HepG2 (cell line): ENCODE measurements at regions of chr5 and their contacts with region 1.

Region 1: GRCh38 chr5:74500110-74500917 is 140.2 kb downstream of the ENC1 start:
- DNase-seq: peak; percentile 96
- ATAC-seq: peak; percentile 83
- H3K4me3 ChIP-seq: peak overlapping the region; percentile 43 to 50 (median 47); a peak in 5 of 6 replicates
- H3K27ac ChIP-seq: peak overlapping the region; percentile 72
- H3K4me1 ChIP-seq: peaks cover 80% of the 10 kb centered on the region
- H3K27me3 ChIP-seq: no peaks in the 10 kb centered on the region
- CTCF ChIP-seq: no peak
- EP300 ChIP-seq: peak in 1 of 2 experiments; percentile 94; a peak in 2 of 4 replicates
- POLR2A ChIP-seq: 0 out of 4 replicates have a peak, but pooled peaks of 1 of the 2 experiments have one; percentile 19
- RAD21 ChIP-seq: no peak

Region 2: DNA sequence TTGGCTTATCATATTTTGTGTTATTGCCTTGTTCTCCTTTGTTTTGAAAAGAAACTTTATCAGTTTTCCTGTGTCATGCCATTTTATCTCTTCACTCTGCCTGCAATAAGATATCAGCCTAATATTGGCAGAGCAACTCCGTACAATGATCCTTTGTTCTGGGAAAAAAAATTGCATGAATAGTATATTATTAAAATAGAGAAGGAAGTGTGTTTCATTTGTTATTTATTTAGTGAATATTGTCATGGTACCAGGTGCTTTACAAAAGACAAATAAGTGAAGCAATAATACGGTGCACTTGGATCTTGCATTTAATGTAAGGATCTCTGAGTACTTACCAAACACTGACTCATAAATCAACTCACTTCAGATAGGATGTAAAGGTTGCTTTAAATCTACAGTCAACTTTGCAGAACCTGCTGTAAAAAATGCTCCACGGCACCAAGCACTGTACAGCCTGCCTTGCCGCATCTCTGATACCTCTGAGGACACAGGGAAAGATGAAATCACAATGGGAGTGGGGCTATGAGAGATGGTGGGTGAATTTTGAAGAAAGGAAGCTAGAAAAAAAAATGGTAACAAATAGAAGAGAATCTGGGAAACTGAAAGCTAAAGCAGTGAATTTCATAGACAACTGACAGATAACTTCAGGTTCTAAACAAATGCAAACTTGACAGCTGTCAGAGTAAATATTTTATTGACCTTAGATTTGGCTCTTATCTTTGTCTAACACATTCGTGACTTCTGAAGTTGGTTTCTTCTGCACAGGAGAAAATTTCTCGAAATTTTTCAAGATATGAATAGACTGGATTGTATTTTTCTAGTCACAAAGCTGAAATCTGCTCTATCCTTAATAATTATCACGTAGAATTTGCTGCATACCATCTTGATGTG is 91.9 kb before region 1 on chr5:
- CTCF ChIA-PET with region 1: no interaction called
- POLR2A ChIA-PET with region 1: no interaction called
- in situ Hi-C with region 1: no loop called
- intact Hi-C with region 1: loop called (anchors 1 kb)
- DNase-seq: peak; percentile 96
- ATAC-seq: peak; percentile 96
- H3K4me3 ChIP-seq: peak overlapping the region in 2 of 3 experiments; percentile 35 to 38; a peak in 2 of 6 replicates
- H3K27ac ChIP-seq: peak overlapping the region; percentile 66
- H3K4me1 ChIP-seq: peaks cover 66% of the 10 kb centered on the region
- H3K27me3 ChIP-seq: no peaks in the 10 kb centered on the region
- CTCF ChIP-seq: no peak
- EP300 ChIP-seq: peak; percentile 87 to 92; a peak in 3 of 4 replicates
- POLR2A ChIP-seq: no peak
- RAD21 ChIP-seq: 0 out of 2 replicates have a peak, but pooled peaks have one; percentile 17

Region 3: DNA sequence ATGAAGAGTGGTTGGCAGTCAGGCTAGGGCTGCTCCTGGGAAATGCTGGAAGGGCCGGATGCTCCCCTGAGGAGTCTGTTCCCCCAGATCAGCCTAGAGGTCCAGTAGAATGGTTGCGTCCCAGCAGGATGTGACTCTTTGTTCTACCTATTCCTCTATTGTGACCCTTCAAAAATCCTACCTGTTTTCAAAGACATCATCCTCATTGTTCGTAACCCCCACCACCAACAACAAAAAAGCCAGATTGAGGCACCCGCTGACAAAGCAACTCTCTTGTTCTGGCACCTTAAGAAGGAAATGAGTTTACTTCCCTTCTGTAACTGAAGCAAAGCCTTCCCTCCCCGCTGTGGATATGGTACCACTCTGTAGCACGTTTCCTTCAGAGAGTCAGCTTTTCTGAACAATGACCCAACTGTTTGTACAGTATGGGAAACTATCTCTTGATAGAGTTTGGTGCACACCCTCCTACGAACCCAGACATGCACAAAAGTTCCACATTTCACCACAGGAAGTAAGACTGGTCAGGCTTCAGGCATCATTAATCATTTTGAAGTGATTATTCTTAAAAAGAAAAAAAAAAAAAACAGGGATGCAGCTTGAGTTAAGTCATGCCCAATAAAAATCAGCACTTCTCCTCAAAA is 66.9 kb before region 1 on chr5:
- CTCF ChIA-PET with region 1: no interaction called
- POLR2A ChIA-PET with region 1: no interaction called
- in situ Hi-C with region 1: no loop called
- intact Hi-C with region 1: no loop called
- DNase-seq: no peak
- ATAC-seq: no peak
- H3K4me3 ChIP-seq: no peak overlapping the region
- H3K27ac ChIP-seq: no peak overlapping the region
- H3K4me1 ChIP-seq: peaks cover 12% of the 10 kb centered on the region
- H3K27me3 ChIP-seq: no peaks in the 10 kb centered on the region; a peak in 1 of 5 replicates
- CTCF ChIP-seq: no peak
- EP300 ChIP-seq: no peak
- POLR2A ChIP-seq: no peak
- RAD21 ChIP-seq: no peak

Region 4: GRCh38 chr5:74521401-74521800 is 21.1 kb after region 1 on chr5:
- CTCF ChIA-PET with region 1: no interaction called
- POLR2A ChIA-PET with region 1: no interaction called
- in situ Hi-C with region 1: no loop called
- intact Hi-C with region 1: no loop called
- DNase-seq: no peak
- ATAC-seq: no peak
- H3K4me3 ChIP-seq: no peak overlapping the region
- H3K27ac ChIP-seq: no peak overlapping the region
- H3K4me1 ChIP-seq: peaks cover 60% of the 10 kb centered on the region
- H3K27me3 ChIP-seq: no peaks in the 10 kb centered on the region
- CTCF ChIP-seq: no peak
- EP300 ChIP-seq: no peak
- POLR2A ChIP-seq: no peak
- RAD21 ChIP-seq: no peak

Region 5: DNA sequence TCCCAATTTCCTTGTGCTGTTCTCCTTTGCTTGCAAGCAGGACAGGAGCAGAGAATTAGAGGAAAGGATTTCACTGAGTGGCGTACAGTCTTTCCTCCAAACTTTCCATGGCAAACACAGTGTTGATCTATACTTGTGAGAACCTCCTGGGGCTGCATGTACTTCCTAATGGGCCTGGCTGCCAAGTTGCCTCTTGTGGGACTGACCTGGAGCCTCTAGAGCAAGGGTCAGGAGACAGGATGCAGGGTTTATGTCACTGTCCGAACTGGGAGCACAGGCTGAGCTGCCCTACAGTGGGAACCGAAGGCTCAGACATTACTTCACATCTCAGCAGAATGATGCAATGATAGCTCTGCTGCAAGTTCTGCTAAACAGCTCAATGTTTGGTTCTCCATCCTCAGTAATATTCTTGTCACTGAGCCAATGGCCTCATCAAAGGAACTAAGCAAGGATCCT is 37.9 kb after region 1 on chr5:
- CTCF ChIA-PET with region 1: no interaction called
- POLR2A ChIA-PET with region 1: interaction called, 3 read pairs
- in situ Hi-C with region 1: loop called (anchors 5 kb)
- intact Hi-C with region 1: no loop called
- DNase-seq: peak; percentile 89
- ATAC-seq: peak; percentile 99
- H3K4me3 ChIP-seq: peak overlapping the region in 1 of 3 experiments; percentile 32; a peak in 2 of 6 replicates
- H3K27ac ChIP-seq: peak overlapping the region; percentile 51
- H3K4me1 ChIP-seq: peaks cover 61% of the 10 kb centered on the region
- H3K27me3 ChIP-seq: no peaks in the 10 kb centered on the region
- CTCF ChIP-seq: 0 out of 2 replicates have a peak, but pooled peaks have one; percentile 8
- EP300 ChIP-seq: peak; percentile 57 to 87; a peak in 2 of 4 replicates
- POLR2A ChIP-seq: 0 out of 4 replicates have a peak, but pooled peaks of 1 of the 2 experiments have one; percentile 18
- RAD21 ChIP-seq: no peak